ENCODE measurements at regions of chr6 and their contacts with region 1.

Region 1: GRCh38 chr6:29752451-29753308 is 29.4 kb downstream of the HLA-F start:
- DNase-seq: peak; percentile 71 to 94 (median 79)
- ATAC-seq: peak; percentile 72
- H3K4me3 ChIP-seq: peak overlapping the region; percentile 75
- H3K4me3 Mint-ChIP-seq: peak overlapping the region; percentile 90
- H3K27ac ChIP-seq: peak overlapping the region; percentile 30 to 58
- H3K27ac Mint-ChIP-seq: peak overlapping the region; percentile 83
- H3K4me1 ChIP-seq: peaks cover 28% of the 10 kb centered on the region
- H3K4me1 Mint-ChIP-seq: peaks cover 42% of the 10 kb centered on the region
- H3K27me3 ChIP-seq: no peaks in the 10 kb centered on the region
- H3K27me3 Mint-ChIP-seq: no peaks in the 10 kb centered on the region
- CTCF ChIP-seq: peak; percentile 99

Region 2: DNA sequence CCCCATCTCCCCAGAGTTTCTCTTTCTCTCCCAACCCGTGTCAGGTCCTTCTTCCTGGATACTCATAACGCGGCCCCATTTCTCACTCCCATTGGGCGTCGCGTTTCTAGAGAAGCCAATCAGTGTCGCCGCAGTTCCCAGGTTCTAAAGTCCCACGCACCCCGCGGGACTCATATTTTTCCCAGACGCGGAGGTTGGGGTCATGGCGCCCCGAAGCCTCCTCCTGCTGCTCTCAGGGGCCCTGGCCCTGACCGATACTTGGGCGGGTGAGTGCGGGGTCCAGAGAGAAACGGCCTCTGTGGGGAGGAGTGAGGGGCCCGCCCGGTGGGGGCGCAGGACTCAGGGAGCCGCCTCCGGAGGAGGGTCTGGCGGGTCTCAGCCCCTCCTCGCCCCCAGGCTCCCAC is 29.4 kb before region 1 on chr6 and contains the start of gene HLA-F:
- CTCF ChIA-PET with region 1: interaction called, 5 read pairs
- POLR2A ChIA-PET with region 1: interaction called, 22 read pairs
- intact Hi-C with region 1: no loop called
- DNase-seq: peak in 13 of 14 experiments; percentile 69 to 96 (median 79)
- ATAC-seq: peak; percentile 90
- H3K4me3 ChIP-seq: peak within 1 kb of the TSS; percentile 100
- H3K4me3 Mint-ChIP-seq: peak within 1 kb of the TSS; percentile 97
- H3K27ac ChIP-seq: peak within 1 kb of the TSS; percentile 99 to 100
- H3K27ac Mint-ChIP-seq: peak within 1 kb of the TSS; percentile 95
- H3K4me1 ChIP-seq: peaks cover 63% of the 10 kb centered on the region
- H3K4me1 Mint-ChIP-seq: peaks cover 70% of the 10 kb centered on the region
- H3K27me3 ChIP-seq: no peaks in the 10 kb centered on the region
- H3K27me3 Mint-ChIP-seq: no peaks in the 10 kb centered on the region
- CTCF ChIP-seq: no peak
- total RNA-seq, gene HLA-F: 560 TPM

Region 3: DNA sequence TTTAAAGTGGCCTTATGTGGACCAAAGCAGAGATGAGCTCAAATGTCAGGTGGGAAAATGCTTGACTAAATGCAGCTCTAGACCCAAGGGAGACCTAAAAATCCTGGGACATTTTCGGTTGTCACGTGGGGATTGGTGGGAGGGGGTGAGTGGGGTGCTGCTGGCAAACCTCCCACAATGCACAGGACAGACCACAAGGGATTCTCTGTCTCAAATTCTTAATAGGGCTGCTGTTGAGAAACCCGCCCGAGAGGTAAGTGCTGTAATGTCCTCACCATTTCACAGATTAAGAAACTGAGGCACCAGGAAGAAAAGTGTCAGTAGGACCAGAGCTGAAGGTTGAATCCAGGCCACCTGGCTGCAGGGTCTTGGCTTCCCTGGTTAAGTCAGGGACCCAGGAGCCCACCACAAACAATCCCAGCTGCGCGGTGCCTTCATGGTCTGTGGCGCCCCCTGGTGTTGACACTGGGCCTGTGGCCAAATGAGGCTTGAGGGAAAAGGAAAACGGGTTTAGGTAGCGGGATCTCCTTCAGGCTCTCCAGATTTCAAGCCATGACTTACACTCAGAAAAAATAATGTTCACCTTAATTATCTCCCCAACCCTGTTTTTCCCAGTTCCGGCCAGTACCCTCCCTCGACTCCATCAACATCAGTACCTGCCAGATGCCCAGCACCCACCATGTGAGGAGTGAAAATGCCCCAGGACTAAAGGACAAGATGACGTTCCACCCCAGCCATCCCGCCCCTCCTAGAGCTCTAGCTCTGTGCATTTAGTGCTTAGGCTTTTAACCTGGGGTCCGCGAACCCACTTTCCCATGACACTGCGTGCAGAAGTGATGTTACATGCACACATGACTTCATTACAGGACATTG is 82.1 kb after region 1 on chr6:
- CTCF ChIA-PET with region 1: interaction called, 3 read pairs
- POLR2A ChIA-PET with region 1: no interaction called
- intact Hi-C with region 1: loop called in 1 of 2 experiments (anchors 5 kb)
- DNase-seq: peak; percentile 30 to 74 (median 52)
- ATAC-seq: peak; percentile 54
- H3K4me3 ChIP-seq: no peak overlapping the region
- H3K4me3 Mint-ChIP-seq: no peak overlapping the region
- H3K27ac ChIP-seq: no peak overlapping the region
- H3K27ac Mint-ChIP-seq: no peak overlapping the region
- H3K4me1 ChIP-seq: peaks cover 6% of the 10 kb centered on the region
- H3K4me1 Mint-ChIP-seq: no peaks in the 10 kb centered on the region
- H3K27me3 ChIP-seq: peaks cover 14 to 30% of the 10 kb centered on the region in 2 experiments
- H3K27me3 Mint-ChIP-seq: peaks cover 75% of the 10 kb centered on the region
- CTCF ChIP-seq: peak; percentile 83

Measured in CD4-positive, alpha-beta T cell (primary cell).